GM23248 (cell line): ENCODE measurements at regions of chr19 and their contacts with region 1.

Region 1: DNA sequence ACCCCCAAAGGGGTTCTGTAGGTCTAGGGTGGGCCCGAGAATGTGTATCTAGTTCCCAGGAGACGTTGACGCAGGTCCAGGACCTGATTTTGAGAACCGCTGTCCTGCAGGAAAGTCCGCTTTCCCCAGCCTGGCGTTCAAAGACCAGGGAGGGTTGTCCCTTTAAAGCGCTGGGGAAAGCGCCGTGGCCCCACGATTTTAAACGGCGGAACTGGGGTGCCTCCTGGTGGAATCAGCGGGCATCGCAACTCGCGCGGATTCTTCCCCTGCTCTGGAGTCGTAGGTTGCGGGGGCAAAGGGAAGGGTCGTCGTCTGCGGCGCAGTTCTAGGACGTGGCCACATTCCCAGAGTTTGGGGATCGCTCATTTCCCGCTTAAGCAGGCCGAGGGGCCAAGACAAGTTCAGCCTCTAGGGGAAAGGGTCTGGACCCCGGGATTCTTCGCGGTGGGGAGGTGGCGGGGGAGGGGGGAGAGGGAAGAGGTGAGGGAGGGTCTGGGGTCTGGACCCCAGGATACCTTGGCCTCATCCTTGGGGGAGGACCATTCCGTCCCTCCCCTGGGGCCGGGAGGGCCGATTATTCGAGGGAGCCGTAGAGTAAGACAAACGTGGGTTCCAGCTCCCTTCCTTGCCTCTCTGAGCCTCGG is 7.7 kb downstream of the PNMA8B start:
- DNase-seq: peak; percentile 85
- H3K4me3 ChIP-seq: peak overlapping the region; percentile 69
- H3K27ac ChIP-seq: no peak overlapping the region
- H3K4me1 ChIP-seq: peaks cover 6% of the 10 kb centered on the region
- H3K27me3 ChIP-seq: no peaks in the 10 kb centered on the region

Region 2: DNA sequence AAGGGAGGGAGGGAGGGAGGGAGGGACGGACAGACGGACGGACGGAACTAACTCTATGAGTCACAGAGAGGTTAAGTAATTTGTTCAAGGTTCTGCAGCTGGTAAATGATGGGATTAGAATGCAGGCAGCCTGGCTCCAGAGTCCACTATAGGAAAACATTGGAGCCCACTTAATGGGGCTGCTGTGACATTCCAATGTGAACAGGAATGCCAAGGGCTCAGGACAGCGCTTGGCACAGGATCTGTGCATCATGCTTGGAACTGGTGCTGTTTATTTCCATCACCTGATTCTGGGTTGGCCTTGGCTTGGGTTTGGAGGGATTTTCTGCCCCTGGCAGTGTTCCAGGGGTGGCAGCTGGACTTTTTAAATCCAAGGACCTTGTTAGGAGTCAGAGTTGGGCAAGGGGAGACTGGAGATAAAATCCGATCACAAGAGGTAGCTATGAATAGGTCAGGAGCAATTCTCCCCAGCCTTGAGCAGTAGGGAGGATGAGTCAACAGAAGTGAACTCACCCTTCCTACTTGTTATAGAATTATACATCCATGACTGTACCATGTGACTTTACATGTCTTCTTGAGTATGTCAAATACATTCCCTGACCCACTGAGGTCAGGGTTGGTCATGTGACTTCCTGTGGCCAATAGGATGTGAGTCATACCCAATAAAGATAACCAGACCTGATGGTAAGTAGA is 198.9 kb before region 1 on chr19:
- in situ Hi-C with region 1: loop called (anchors 10 kb)
- DNase-seq: peak; percentile 93
- H3K4me3 ChIP-seq: no peak overlapping the region
- H3K27ac ChIP-seq: peak overlapping the region; percentile 73
- H3K4me1 ChIP-seq: peaks cover 8% of the 10 kb centered on the region
- H3K27me3 ChIP-seq: no peaks in the 10 kb centered on the region

Region 3: DNA sequence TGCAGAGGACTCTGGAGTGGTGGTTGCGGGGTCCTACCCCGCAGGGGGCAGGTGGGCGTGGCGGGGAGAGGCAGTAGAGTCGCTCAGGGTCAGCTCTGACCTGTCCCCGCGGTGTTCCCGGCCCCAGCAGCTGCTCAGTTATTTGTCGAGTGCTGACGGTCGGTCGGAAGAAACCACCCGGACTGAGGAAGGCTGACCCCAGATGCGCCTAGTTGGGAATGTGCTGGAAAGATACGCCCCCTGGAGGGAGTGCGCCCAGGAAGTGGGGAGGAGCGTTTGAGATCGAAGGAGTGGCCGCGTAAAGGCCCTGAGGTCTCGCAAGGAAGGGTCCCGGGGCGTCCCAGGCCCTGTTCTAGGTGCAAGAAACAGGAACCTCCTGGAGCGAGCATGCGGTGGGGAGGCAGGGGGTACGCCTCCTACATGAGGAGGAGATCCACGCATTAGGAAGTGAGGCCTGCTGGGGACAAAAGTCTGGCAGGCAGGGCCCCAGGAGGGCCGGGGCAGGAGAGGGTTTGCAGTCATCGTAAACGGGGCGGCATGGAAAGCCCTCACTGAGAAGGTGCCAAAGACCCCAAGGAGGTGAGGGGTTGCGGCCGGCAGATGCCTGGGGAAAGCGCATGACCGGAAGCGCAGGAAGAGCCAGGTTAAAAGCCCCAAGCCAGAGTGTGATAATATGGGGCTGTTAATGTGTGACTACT is 83.7 kb before region 1 on chr19:
- in situ Hi-C with region 1: loop called (anchors 5 kb)
- DNase-seq: peak; percentile 38
- H3K4me3 ChIP-seq: no peak overlapping the region; the same call in 1 of the 2 replicates
- H3K27ac ChIP-seq: no peak overlapping the region
- H3K4me1 ChIP-seq: peaks cover 6% of the 10 kb centered on the region; the same call in 1 of the 2 replicates
- H3K27me3 ChIP-seq: peaks cover 4% of the 10 kb centered on the region; the same call in 1 of the 2 replicates

Region 4: DNA sequence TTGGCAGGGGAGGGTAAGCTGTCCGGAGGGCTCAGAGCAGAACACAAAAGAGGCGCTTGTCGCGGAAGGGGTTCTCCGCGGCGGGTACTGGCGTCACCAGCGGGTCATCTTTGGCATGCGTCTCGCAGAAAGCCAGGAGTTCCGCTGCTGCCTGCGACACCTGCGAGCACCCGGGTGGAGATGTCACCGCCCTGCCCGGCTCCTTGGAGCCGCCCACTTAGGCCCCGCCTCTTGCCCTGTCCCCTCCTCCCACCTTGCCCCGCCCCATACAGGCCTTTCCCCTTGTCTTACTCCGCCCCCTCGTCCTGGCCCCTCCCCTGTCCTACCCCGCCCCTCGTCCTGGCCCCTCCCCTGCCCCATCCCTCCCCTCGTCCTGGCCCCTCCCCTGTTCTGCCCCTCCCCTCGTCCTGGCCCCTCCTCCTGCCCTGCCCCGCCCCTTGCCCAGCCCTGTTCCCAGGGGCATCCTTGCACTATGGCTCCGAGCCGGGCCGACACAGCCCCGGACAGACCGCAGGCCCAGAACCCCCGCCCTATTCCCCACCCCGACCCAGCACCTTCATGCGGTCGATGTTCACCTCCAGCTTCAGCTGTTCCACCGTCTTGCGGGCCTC is 146.2 kb after region 1 on chr19:
- in situ Hi-C with region 1: no loop called
- DNase-seq: peak; percentile 93
- H3K4me3 ChIP-seq: peak overlapping the region; percentile 78
- H3K27ac ChIP-seq: no peak overlapping the region
- H3K4me1 ChIP-seq: peaks cover 21% of the 10 kb centered on the region
- H3K27me3 ChIP-seq: no peaks in the 10 kb centered on the region

Region 5: DNA sequence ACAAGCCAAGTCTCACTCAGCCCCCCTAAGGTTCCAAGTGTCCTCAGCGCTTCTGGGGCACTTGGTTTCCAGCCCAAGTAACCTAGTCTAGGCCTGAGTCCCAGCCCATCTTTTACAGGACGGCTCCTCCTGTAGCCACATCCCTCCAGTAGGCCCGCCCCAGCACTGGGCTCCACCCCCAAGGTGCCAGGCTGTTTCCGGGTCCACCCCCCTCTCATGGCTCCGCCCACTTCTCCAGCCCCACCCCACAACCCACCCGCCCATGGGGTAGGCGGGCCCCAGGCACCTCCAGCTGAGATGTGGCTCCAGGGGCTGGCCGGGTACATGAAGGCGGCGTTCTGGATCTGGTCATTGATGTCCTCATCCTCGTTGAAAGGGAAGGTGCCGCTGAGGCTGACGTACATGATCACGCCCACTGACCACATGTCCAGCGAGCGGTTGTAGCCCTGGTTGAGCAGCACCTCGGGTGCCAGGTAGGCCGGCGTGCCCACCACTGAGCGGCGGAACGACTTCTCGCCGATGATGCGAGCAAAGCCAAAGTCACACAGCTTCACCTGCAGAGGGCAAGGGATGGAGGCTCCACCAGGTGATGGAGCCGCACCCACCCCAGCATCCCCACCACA is 190.3 kb after region 1 on chr19:
- in situ Hi-C with region 1: no loop called
- DNase-seq: peak; percentile 33
- H3K4me3 ChIP-seq: no peak overlapping the region
- H3K27ac ChIP-seq: no peak overlapping the region
- H3K4me1 ChIP-seq: no peaks in the 10 kb centered on the region
- H3K27me3 ChIP-seq: no peaks in the 10 kb centered on the region